ENCODE measurements at regions of chr4 and their contacts with region 1.

Region 1: DNA sequence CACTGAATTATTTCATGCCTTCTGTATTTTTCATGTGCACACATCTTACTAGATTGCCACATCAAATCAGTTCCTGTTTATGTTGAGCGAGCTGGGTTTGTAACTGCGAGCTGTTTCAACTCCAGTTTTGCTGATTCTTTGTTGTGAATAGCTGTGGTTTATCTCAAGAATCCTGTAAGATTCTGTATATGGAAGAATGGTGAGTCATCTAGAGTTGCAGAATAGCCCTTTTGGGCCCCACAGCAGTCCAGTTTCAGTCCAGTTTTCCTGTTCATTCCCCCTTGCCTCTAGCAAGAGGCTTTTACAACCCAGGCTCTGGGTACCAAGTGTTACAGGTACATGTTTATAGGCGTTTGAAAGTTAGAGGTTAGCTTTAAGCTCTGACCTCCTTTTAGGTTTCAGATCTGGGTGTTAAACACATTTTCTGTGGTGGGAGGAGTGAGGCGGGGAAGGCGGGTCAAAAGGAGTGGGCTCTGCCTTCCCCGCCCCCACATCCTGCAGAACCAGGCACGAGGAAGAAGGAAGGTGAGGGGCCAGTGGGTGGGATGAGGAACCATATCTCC is 32.7 kb downstream of the TBC1D14 start:
- DNase-seq: peak in 8 of 9 donors; percentile 47 to 76 (median 64)
- ATAC-seq: peak; percentile 87
- H3K4me3 ChIP-seq: peak overlapping the region; percentile 46
- H3K4me3 Mint-ChIP-seq: peak overlapping the region; percentile 73 to 91 (median 83)
- H3K27ac ChIP-seq: peak overlapping the region; percentile 57
- H3K27ac Mint-ChIP-seq: peak overlapping the region; percentile 76 to 94 (median 90)
- H3K4me1 ChIP-seq: peaks cover 46 to 51% of the 10 kb centered on the region in 2 donors
- H3K4me1 Mint-ChIP-seq: peaks cover 48 to 85% (median 74%) of the 10 kb centered on the region in 7 donors
- H3K27me3 ChIP-seq: no peaks in the 10 kb centered on the region
- H3K27me3 Mint-ChIP-seq: no peaks in the 10 kb centered on the region

Region 2: DNA sequence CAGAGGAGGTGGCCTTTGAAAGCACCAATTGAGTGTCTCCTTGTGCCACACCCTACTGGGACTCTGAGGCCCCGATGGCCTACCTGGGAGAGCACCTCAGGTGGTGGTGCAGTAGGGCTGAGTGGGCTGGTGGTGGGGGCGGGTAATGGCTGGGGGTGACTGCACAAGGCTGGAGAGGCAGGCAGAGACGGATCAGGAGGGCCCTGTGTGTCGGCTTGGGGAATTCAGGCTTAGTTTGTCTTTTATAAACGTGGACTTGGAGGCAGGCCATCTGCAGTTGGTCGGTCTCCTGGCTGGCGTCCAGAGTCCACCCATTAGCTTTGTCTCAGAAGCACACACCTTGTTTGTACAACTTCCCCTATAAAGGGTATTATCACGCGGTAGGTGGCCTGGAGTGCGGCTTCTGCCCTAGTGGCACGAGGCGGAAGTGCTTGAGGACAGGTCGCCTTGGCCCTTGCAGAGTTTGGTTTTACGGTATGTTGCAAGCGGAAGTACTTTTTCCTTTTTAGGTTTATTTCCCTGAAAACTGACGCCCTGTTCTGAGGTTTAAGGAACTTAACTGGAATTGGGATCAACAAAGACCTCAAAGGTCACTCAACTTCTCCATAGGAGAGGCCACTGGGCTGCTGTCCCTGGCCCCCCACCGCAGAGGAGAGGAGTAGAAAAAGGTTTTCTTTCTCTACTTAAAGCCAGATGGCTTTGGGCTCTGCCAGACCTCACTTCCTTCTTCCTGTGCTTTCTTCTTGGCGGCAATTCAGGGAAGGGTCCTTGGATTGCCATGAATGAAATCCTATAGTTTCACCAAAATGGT is 24.7 kb before region 1 on chr4:
- CTCF ChIA-PET with region 1: interaction called, 8 read pairs
- POLR2A ChIA-PET with region 1: interaction called, 62 read pairs
- intact Hi-C with region 1: loop called in 1 of 2 experiments (anchors 2 kb)
- DNase-seq: peak in 4 of 9 donors; percentile 17 to 41 (median 31)
- ATAC-seq: peak; percentile 80
- H3K4me3 ChIP-seq: peak overlapping the region; percentile 33
- H3K4me3 Mint-ChIP-seq: peak overlapping the region; percentile 65 to 78 (median 74)
- H3K27ac ChIP-seq: peak overlapping the region; percentile 78
- H3K27ac Mint-ChIP-seq: peak overlapping the region; percentile 89 to 98 (median 96)
- H3K4me1 ChIP-seq: peaks cover 31 to 55% of the 10 kb centered on the region in 2 donors
- H3K4me1 Mint-ChIP-seq: peaks cover 69 to 87% (median 78%) of the 10 kb centered on the region in 7 donors
- H3K27me3 ChIP-seq: no peaks in the 10 kb centered on the region
- H3K27me3 Mint-ChIP-seq: no peaks in the 10 kb centered on the region

Region 3: GRCh38 chr4:6926681-6927478 is 15.4 kb before region 1 on chr4:
- CTCF ChIA-PET with region 1: interaction called, 4 read pairs
- POLR2A ChIA-PET with region 1: interaction called, 19 read pairs
- intact Hi-C with region 1: loop called (anchors 1 kb)
- DNase-seq: peak in 7 of 9 donors; percentile 25 to 75 (median 43)
- ATAC-seq: peak; percentile 82
- H3K4me3 ChIP-seq: peak overlapping the region; percentile 36
- H3K4me3 Mint-ChIP-seq: peak overlapping the region; percentile 64 to 92 (median 79)
- H3K27ac ChIP-seq: peak overlapping the region; percentile 56
- H3K27ac Mint-ChIP-seq: peak overlapping the region; percentile 65 to 95 (median 87)
- H3K4me1 ChIP-seq: peaks cover 26 to 48% of the 10 kb centered on the region in 2 donors
- H3K4me1 Mint-ChIP-seq: peaks cover 68 to 90% (median 79%) of the 10 kb centered on the region in 7 donors
- H3K27me3 ChIP-seq: no peaks in the 10 kb centered on the region
- H3K27me3 Mint-ChIP-seq: no peaks in the 10 kb centered on the region

Region 4: DNA sequence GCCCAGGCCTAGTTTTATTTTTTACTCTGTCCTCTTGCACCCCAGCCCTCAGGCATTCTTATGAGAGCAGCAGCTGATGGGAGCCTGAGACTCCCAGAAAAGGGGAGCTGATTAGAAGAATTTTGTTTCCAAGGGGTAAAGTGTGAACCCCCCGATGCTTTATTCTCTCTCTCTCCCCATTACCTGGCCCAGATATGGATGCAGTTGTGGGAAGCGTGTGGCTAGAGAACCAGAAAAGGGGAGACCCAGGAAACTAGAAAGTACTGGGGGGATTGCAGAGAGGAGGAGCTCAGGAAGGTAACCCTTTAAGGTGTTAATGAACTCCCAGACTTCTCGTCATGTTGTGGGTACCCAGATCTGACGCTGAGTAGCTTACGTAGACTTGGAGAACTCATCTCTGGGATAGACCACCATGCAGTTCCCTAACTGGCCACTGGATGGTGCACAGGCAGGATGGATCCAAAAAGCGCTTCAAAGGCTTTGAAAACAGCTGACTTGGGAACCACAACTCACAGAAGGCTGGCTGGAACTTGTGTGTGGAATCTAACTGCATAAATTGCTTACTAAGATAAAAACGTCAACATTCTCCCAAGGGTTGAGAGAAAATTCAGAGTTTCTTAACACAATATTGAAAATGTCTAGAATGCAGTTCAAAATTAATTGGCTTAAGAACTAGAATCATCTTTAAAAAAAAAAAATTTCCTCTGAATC is 32.0 kb after region 1 on chr4:
- CTCF ChIA-PET with region 1: interaction called, 6 read pairs
- POLR2A ChIA-PET with region 1: no interaction called
- intact Hi-C with region 1: loop called in 1 of 2 experiments (anchors 1 kb)
- DNase-seq: peak; percentile 55 to 82 (median 74)
- ATAC-seq: peak; percentile 100
- H3K4me3 ChIP-seq: no peak overlapping the region
- H3K4me3 Mint-ChIP-seq: peak overlapping the region in 3 of 10 donors; percentile 11 to 45 (median 18)
- H3K27ac ChIP-seq: no peak overlapping the region
- H3K27ac Mint-ChIP-seq: peak overlapping the region in 5 of 9 donors; percentile 43 to 86 (median 69)
- H3K4me1 ChIP-seq: peaks cover 0 to 9% of the 10 kb centered on the region in 2 donors
- H3K4me1 Mint-ChIP-seq: peaks cover 5 to 38% (median 22%) of the 10 kb centered on the region in 7 donors
- H3K27me3 ChIP-seq: no peaks in the 10 kb centered on the region
- H3K27me3 Mint-ChIP-seq: no peaks in the 10 kb centered on the region

Region 5: GRCh38 chr4:6992728-6993677 is 50.7 kb after region 1 on chr4:
- CTCF ChIA-PET with region 1: no interaction called
- POLR2A ChIA-PET with region 1: no interaction called
- intact Hi-C with region 1: no loop called
- DNase-seq: no peak
- ATAC-seq: no peak
- H3K4me3 ChIP-seq: no peak overlapping the region
- H3K4me3 Mint-ChIP-seq: peak overlapping the region in 2 of 10 donors; percentile 29 to 55
- H3K27ac ChIP-seq: no peak overlapping the region
- H3K27ac Mint-ChIP-seq: peak overlapping the region in 4 of 9 donors; percentile 14 to 55 (median 43)
- H3K4me1 ChIP-seq: peaks cover 7 to 17% of the 10 kb centered on the region in 2 donors
- H3K4me1 Mint-ChIP-seq: peaks cover 36 to 63% (median 49%) of the 10 kb centered on the region in 7 donors
- H3K27me3 ChIP-seq: no peaks in the 10 kb centered on the region
- H3K27me3 Mint-ChIP-seq: no peaks in the 10 kb centered on the region

Region 6: DNA sequence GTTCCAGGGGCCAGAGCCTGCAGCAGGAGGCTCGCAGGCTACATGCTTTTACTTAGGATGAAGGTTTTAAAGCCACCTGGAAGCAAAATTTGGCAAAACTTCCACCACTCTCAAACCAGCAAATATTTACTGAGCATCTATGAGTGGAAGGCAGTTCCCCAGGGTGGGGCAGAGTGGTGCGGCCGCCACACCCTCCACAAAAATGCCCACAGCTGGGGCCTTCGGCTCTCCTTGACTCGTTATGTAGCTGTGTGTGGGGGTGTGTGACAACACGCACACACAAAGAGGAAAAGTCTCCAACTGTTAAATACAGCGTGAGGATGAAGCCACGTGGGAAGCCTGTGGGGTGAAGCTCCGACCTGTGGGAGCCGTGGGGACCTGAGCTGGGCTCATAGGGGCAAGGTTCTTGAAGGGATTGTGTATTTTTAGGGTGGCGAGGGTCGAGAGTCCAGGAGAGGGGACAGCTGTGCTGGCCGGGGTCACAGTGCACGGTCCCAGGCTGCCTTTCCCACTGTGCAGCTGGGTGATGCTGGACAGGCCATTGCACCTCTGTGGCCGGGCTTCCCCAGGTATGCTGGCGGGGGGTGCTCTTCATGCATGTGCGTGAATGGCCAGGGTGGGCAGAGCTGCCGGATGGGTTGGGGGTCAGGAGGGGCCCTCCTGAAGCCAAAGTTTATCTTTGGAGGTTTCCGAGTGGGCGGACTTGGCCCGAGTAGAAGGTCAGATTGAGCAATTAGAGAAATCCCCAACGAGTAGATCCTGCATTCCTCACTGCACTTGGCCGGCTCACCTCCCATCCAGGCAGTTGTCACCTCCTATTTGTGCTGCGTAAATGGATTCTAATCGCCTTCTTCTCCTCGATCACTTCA is 275.4 kb after region 1 on chr4:
- CTCF ChIA-PET with region 1: no interaction called
- POLR2A ChIA-PET with region 1: no interaction called
- intact Hi-C with region 1: no loop called
- DNase-seq: no peak
- ATAC-seq: no peak
- H3K4me3 ChIP-seq: no peak overlapping the region
- H3K4me3 Mint-ChIP-seq: no peak overlapping the region
- H3K27ac ChIP-seq: no peak overlapping the region
- H3K27ac Mint-ChIP-seq: peak overlapping the region in 1 of 9 donors; percentile 36
- H3K4me1 ChIP-seq: no peaks in the 10 kb centered on the region
- H3K4me1 Mint-ChIP-seq: no peaks in the 10 kb centered on the region
- H3K27me3 ChIP-seq: no peaks in the 10 kb centered on the region
- H3K27me3 Mint-ChIP-seq: peaks cover 0 to 15% (median 6%) of the 10 kb centered on the region in 5 donors